IMR-90 (cell line): ENCODE measurements at regions of chr15 and their contacts with region 1.

Region 1: DNA sequence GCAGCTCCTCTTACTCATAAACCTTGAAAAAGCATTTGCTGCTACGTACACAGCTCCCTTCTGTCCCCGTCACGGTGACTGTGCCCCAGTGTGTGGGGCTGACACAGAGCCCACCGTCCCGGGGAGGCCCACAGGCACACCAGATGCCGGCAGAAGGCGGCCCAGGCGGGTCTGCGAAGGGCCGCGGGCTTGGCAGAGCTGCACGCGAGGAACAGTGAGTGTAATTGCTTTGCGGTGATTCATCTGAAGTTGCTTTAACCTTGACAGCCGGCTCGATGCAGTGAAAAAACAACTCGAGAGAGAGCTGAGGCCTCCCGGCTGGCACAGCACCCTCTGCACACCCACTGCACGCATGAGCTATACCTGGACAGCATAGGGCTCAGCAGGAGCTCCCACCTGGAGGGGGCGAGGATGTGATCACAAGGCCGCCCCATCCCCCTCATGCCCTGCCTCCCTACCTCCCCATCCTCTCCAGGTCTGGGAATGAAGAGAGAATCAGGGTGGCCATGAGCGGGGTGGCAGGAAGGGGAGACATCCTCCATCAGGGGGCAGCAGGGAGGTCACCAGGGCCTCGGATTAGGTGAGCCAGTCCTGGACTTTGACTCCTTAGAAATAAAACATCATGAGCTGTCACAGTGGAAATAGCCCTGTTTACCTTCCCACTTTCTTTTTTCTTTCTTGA is 172.7 kb downstream of the MEGF11 start:
- DNase-seq: peak; percentile 58
- ATAC-seq: peak; percentile 94
- H3K4me3 ChIP-seq: no peak overlapping the region
- H3K27ac ChIP-seq: no peak overlapping the region
- H3K4me1 ChIP-seq: peaks cover 4% of the 10 kb centered on the region; the same call in 1 of the 2 replicates
- H3K27me3 ChIP-seq: peaks cover 48% of the 10 kb centered on the region
- CTCF ChIP-seq: no peak
- POLR2A ChIP-seq: no peak
- RAD21 ChIP-seq: no peak

Region 2: GRCh38 chr15:66097151-66098021 is 16.5 kb after region 1 on chr15:
- CTCF ChIA-PET with region 1: no interaction called
- POLR2A ChIA-PET with region 1: no interaction called
- dilution Hi-C with region 1: no loop called
- in situ Hi-C with region 1: no loop called
- intact Hi-C with region 1: no loop called
- DNase-seq: peak; percentile 0
- ATAC-seq: no peak; the same call in 1 of the 2 replicates
- H3K4me3 ChIP-seq: no peak overlapping the region
- H3K27ac ChIP-seq: no peak overlapping the region
- H3K4me1 ChIP-seq: no peaks in the 10 kb centered on the region
- H3K27me3 ChIP-seq: peaks cover 55% of the 10 kb centered on the region
- CTCF ChIP-seq: no peak
- POLR2A ChIP-seq: no peak
- RAD21 ChIP-seq: no peak

Region 3: GRCh38 chr15:66212563-66212921 is 131.7 kb after region 1 on chr15:
- CTCF ChIA-PET with region 1: no interaction called
- POLR2A ChIA-PET with region 1: interaction called, 16 read pairs
- dilution Hi-C with region 1: no loop called
- in situ Hi-C with region 1: no loop called
- intact Hi-C with region 1: no loop called
- DNase-seq: no peak
- ATAC-seq: no peak
- H3K4me3 ChIP-seq: no peak overlapping the region
- H3K27ac ChIP-seq: no peak overlapping the region
- H3K4me1 ChIP-seq: no peaks in the 10 kb centered on the region
- H3K27me3 ChIP-seq: peaks cover 41% of the 10 kb centered on the region
- CTCF ChIP-seq: no peak
- POLR2A ChIP-seq: no peak
- RAD21 ChIP-seq: no peak